ENCODE measurements at regions of chr5 and their contacts with region 1.

Region 1: GRCh38 chr5:157130925-157131324 is 11.7 kb downstream of the MED7 start:
- DNase-seq: peak; percentile 41 to 44
- ATAC-seq: peak; percentile 63 to 67; a peak in 4 of 6 replicates
- H3K4me3 ChIP-seq: no peak overlapping the region
- H3K27ac ChIP-seq: peak overlapping the region; percentile 77 to 87
- H3K4me1 ChIP-seq: peaks cover 26% of the 10 kb centered on the region
- CTCF ChIP-seq: no peak
- EP300 ChIP-seq: no peak
- POLR2A ChIP-seq: no peak
- RAD21 ChIP-seq: no peak

Region 2: GRCh38 chr5:157038568-157039187 is 92.2 kb before region 1 on chr5:
- CTCF ChIA-PET with region 1: interaction called, 12 read pairs
- POLR2A ChIA-PET with region 1: no interaction called
- DNase-seq: no peak
- ATAC-seq: no peak; a peak in 1 of 6 replicates
- H3K4me3 ChIP-seq: no peak overlapping the region
- H3K27ac ChIP-seq: peak overlapping the region; percentile 50 to 90; a peak in 5 of 6 replicates
- H3K4me1 ChIP-seq: peaks cover 41% of the 10 kb centered on the region
- CTCF ChIP-seq: no peak
- EP300 ChIP-seq: no peak
- POLR2A ChIP-seq: no peak
- RAD21 ChIP-seq: no peak

Region 3: GRCh38 chr5:157046041-157046440 is 84.9 kb before region 1 on chr5:
- CTCF ChIA-PET with region 1: interaction called, 13 read pairs
- POLR2A ChIA-PET with region 1: no interaction called
- DNase-seq: peak; percentile 60 to 92
- ATAC-seq: peak; percentile 89 to 93
- H3K4me3 ChIP-seq: no peak overlapping the region
- H3K27ac ChIP-seq: peak overlapping the region; percentile 89 to 94
- H3K4me1 ChIP-seq: peaks cover 67% of the 10 kb centered on the region
- CTCF ChIP-seq: no peak
- EP300 ChIP-seq: peak; percentile 55 to 71; a peak in 3 of 5 replicates
- POLR2A ChIP-seq: no peak
- RAD21 ChIP-seq: peak; percentile 18 to 47; a peak in 3 of 5 replicates

Region 4: GRCh38 chr5:157059093-157059539 is 71.8 kb before region 1 on chr5 and contains the start of gene HAVCR1:
- CTCF ChIA-PET with region 1: interaction called, 11 read pairs
- POLR2A ChIA-PET with region 1: no interaction called
- DNase-seq: peak; percentile 85 to 93
- ATAC-seq: peak; percentile 84 to 88
- H3K4me3 ChIP-seq: peak within 1 kb of the TSS; percentile 48
- H3K27ac ChIP-seq: peak within 1 kb of the TSS; percentile 89 to 92
- H3K4me1 ChIP-seq: peaks cover 67% of the 10 kb centered on the region
- CTCF ChIP-seq: no peak
- EP300 ChIP-seq: peak; percentile 41 to 44; a peak in 2 of 5 replicates
- POLR2A ChIP-seq: no peak
- RAD21 ChIP-seq: peak in 1 of 2 experiments; percentile 46; a peak in 4 of 5 replicates
- polyA plus RNA-seq, gene HAVCR1: 94.7 and 143 TPM in 2 replicates

Region 5: GRCh38 chr5:157116483-157116954 is 14.4 kb before region 1 on chr5:
- CTCF ChIA-PET with region 1: interaction called, 12 read pairs
- POLR2A ChIA-PET with region 1: no interaction called
- DNase-seq: no peak
- ATAC-seq: no peak
- H3K4me3 ChIP-seq: no peak overlapping the region
- H3K27ac ChIP-seq: peak overlapping the region in 1 of 2 experiments; percentile 17; a peak in 1 of 6 replicates
- H3K4me1 ChIP-seq: peaks cover 11% of the 10 kb centered on the region
- CTCF ChIP-seq: no peak
- EP300 ChIP-seq: no peak
- POLR2A ChIP-seq: no peak
- RAD21 ChIP-seq: no peak

Region 6: GRCh38 chr5:157142317-157143126 is 11.6 kb after region 1 on chr5 and contains the start of gene MED7:
- CTCF ChIA-PET with region 1: interaction called, 26 read pairs
- POLR2A ChIA-PET with region 1: interaction called, 8 read pairs
- DNase-seq: peak; percentile 99
- ATAC-seq: peak; percentile 99 to 100
- H3K4me3 ChIP-seq: peak within 1 kb of the TSS; percentile 93
- H3K27ac ChIP-seq: peak within 1 kb of the TSS; percentile 95 to 96
- H3K4me1 ChIP-seq: peaks cover 10% of the 10 kb centered on the region; the same call in 2 of the 3 replicates
- CTCF ChIP-seq: no peak
- EP300 ChIP-seq: no peak
- POLR2A ChIP-seq: peak; percentile 65
- RAD21 ChIP-seq: no peak
- polyA plus RNA-seq, gene MED7: 17.9 and 23.0 TPM in 2 replicates

Region 7: GRCh38 chr5:157148734-157149615 is 18.1 kb after region 1 on chr5:
- CTCF ChIA-PET with region 1: interaction called, 19 read pairs
- POLR2A ChIA-PET with region 1: no interaction called
- DNase-seq: peak; percentile 71 to 81
- ATAC-seq: peak; percentile 90 to 94
- H3K4me3 ChIP-seq: no peak overlapping the region
- H3K27ac ChIP-seq: no peak overlapping the region
- H3K4me1 ChIP-seq: no peaks in the 10 kb centered on the region
- CTCF ChIP-seq: peak; percentile 94
- EP300 ChIP-seq: no peak
- POLR2A ChIP-seq: no peak
- RAD21 ChIP-seq: peak; percentile 84 to 88